ENCODE measurements at regions of chr1 and their contacts with region 1.

Region 1: GRCh38 chr1:235513495-235514366 is 9.5 kb upstream of the B3GALNT2 start:
- DNase-seq: peak; percentile 72
- H3K4me3 ChIP-seq: no peak overlapping the region
- H3K27ac ChIP-seq: no peak overlapping the region
- H3K4me1 ChIP-seq: no peaks in the 10 kb centered on the region
- H3K27me3 ChIP-seq: no peaks in the 10 kb centered on the region
- CTCF ChIP-seq: peak; percentile 68 to 74
- POLR2A ChIP-seq: no peak

Region 2: DNA sequence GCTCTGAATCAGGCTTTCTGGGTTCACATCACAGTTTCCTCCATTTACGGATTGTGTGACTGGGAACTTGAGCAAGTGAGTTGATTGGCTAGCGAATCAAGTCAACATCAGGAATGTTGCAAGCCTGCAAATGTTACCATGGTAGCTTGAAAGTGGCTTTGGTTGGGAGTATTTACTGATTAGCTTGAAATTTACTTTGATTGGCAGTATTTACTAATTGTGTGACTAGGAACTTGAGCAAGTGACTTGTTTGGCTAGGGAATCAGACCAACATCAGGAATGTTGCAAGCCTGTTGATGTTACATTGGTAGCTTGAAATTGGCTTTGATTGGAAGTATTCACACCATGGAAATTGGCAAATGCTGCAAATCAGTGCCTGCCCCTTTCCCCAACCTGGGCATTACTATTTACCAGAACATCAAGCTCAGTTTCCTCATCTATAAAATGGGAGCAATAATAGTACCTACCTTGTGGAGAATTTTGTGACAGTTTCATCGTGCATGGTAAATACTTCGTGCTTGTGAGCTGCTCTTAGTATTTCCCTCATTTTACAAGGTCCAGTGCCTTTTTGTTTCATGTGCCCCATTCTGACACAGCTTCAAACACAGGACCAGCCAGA is 13.6 kb after region 1 on chr1:
- CTCF ChIA-PET with region 1: interaction called, 17 read pairs
- POLR2A ChIA-PET with region 1: no interaction called
- dilution Hi-C with region 1: no loop called
- intact Hi-C with region 1: no loop called
- DNase-seq: no peak
- H3K4me3 ChIP-seq: no peak overlapping the region
- H3K27ac ChIP-seq: no peak overlapping the region
- H3K4me1 ChIP-seq: no peaks in the 10 kb centered on the region
- H3K27me3 ChIP-seq: peaks cover 0 to 2% of the 10 kb centered on the region in 2 experiments
- CTCF ChIP-seq: no peak
- POLR2A ChIP-seq: no peak

Region 3: DNA sequence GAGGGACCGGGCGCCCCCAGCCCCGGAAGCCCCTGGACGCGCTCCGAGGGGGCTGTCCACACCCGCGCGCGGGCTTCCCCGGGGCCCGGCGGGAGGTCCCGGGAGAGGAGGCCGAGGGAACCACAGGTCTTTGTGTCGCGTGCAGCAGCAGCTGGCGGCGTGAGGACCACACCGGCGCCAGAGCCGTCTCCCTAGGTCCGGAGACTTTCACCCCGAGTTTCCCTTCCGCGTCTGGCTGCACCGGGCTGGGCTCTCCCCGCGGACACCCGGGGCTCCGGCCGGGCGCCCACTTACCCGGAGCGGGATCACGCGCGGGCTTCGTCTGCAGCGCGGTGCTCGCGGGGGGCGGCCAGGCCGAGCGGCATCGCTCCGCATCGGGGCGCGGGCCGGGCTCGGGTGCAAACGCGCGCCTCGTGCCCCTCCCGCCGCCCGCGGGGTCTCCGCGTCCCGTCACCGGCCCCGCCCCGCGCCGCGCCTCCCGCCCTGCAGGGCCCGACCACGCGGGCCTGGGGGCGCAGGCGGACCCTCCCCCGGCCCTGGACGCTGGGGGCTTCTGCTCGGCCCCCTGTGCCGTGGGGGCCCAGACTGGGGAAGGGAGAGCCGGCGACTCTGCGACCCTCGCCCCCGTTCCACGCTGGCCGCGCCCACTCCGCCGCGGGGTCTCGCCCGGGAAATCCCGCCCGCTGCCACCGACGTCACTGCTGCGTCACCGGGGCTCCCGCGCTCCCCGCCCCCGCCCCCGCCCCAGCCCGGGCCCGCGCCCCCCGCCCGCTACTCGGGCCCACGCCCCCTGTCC is 135.8 kb after region 1 on chr1 and contains the start of gene GNG4:
- CTCF ChIA-PET with region 1: no interaction called
- POLR2A ChIA-PET with region 1: no interaction called
- dilution Hi-C with region 1: no loop called
- intact Hi-C with region 1: loop called (anchors 5 kb)
- DNase-seq: no peak
- H3K4me3 ChIP-seq: peak within 1 kb of the TSS in 2 of 3 experiments; percentile 23 to 43
- H3K27ac ChIP-seq: no peak within 1 kb of the TSS
- H3K4me1 ChIP-seq: peaks cover 11% of the 10 kb centered on the region
- H3K27me3 ChIP-seq: peaks cover 27 to 49% of the 10 kb centered on the region in 2 experiments
- CTCF ChIP-seq: no peak
- POLR2A ChIP-seq: no peak
- total RNA-seq, gene GNG4: not detected in 2 replicates

Region 4: GRCh38 chr1:235739124-235739523 is 225.4 kb after region 1 on chr1:
- CTCF ChIA-PET with region 1: interaction called, 6 read pairs
- POLR2A ChIA-PET with region 1: no interaction called
- dilution Hi-C with region 1: no loop called
- intact Hi-C with region 1: loop called (anchors 5 kb)
- DNase-seq: peak; percentile 74
- H3K4me3 ChIP-seq: no peak overlapping the region
- H3K27ac ChIP-seq: no peak overlapping the region
- H3K4me1 ChIP-seq: peaks cover 14% of the 10 kb centered on the region
- H3K27me3 ChIP-seq: no peaks in the 10 kb centered on the region
- CTCF ChIP-seq: no peak
- POLR2A ChIP-seq: no peak

Region 5: DNA sequence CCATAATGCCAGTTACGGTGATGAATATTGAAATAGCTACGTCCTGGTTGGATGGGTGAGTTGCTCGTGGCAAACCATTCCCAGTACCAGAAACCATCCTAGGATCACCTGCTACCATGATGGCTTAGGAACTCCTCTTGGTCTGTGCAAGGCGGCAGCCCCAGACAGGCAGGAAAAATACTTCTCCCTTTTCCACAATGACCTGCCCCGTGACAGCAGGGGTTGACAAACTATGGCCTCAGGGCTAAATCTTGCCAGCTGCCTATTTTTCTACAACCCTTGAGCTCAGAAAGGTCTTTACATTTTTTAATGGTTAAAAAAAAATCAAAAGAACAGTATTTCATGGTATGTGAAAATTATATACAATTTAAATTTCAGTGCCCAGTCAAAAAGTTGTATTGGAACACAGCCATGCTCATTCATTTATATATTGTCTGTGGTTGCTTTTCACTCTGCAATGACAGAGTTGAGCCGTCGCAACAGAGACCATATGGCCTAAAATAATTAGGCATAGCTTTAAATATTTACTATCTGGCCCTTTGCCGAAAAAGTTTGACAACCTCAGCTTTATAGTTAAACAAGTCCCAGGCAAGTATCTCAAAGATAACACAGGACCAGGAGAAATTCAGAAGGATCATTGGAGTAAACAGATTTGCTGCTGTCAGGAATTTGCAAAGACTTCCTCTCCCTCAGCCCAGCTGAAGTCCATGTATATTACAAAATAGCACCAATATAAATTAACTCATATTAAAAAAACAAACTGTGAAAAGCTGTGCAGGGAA is 516.6 kb after region 1 on chr1:
- CTCF ChIA-PET with region 1: no interaction called
- POLR2A ChIA-PET with region 1: no interaction called
- dilution Hi-C with region 1: no loop called
- intact Hi-C with region 1: no loop called
- DNase-seq: no peak
- H3K4me3 ChIP-seq: no peak overlapping the region
- H3K27ac ChIP-seq: no peak overlapping the region
- H3K4me1 ChIP-seq: no peaks in the 10 kb centered on the region
- H3K27me3 ChIP-seq: no peaks in the 10 kb centered on the region
- CTCF ChIP-seq: no peak
- POLR2A ChIP-seq: no peak

Measured in endothelial cell of umbilical vein (primary cell).